ENCODE measurements at regions of chr16 and their contacts with region 1.

Region 1: GRCh38 chr16:21101631-21102420 is 48.8 kb downstream of the DNAH3 start:
- DNase-seq: no peak
- CTCF ChIP-seq: peak; percentile 40

Region 2: GRCh38 chr16:21083729-21084268 is 18.0 kb before region 1 on chr16:
- CTCF ChIA-PET with region 1: interaction called, 15 read pairs
- POLR2A ChIA-PET with region 1: no interaction called
- DNase-seq: peak; percentile 54
- CTCF ChIP-seq: peak; percentile 71

Region 3: DNA sequence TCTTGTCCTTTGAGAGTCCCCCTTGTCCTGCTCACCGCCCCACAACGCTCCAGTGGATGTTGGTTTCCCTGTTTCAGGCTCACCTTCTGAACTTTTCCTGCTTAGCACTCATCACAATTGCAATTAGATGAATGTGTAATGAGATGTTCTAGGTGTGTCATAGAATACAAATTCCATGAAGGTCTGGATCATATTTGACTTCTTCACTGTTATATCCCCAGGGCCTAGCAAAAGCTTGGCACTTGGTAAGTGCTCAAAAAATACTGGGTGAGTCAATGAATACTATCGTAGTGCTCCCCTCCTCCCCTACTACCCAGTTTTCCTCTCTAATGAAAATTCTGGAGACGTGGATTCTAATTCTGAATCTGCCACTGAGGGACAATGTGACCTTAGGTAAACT is 15.7 kb after region 1 on chr16:
- CTCF ChIA-PET with region 1: no interaction called
- POLR2A ChIA-PET with region 1: no interaction called
- DNase-seq: no peak
- CTCF ChIP-seq: no peak

Measured in GM10248 (cell line).